GM18951 (cell line): ENCODE measurements at regions of chr9 and their contacts with region 1.

Region 1: DNA sequence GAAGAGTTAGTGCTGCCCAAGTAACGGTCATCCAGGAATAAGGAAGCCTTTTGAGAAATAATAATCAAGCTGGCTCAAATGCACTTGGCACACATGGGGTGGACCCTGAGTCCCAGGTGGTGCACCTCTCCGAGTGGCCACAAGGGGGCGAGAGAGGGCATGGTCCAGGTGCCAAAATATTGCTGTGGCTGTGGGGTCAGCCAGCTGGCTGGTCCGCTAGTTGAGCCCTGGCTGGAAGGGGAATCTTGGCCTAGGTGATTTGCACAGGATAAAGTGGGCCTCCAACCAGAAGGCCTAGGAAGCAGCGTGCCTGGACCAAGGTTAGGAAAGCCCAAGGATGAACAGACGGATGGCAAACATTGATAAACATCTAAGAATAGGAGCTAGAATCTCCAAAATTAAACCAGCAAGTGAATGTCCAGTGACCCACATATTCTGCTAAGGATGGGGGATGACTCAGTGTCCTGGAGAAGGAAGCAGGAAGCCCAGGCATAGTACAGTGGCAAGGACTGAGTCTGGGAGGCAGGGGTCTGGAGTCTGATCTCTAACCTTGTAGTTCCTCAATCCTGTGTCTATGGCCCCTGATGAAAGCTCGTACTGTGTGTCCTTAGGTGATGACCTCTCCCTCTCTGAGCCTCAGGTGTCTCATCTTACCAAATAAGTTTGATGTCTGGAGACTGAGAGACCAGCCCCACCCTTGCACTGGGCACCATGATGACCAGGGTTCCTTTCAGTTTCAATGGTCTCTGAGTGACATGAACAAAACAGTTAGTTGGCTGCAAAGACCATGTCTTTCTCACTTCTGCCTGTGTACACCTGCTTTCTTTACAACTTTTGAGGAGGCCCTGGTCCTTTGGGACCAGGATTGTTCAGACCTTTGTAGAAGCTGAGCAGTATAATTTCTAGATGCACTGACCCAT is 19.2 kb upstream of the SHB start:
- POLR2A ChIP-seq: no peak

Region 2: GRCh38 chr9:37913480-37914153 is 174.6 kb before region 1 on chr9:
- in situ Hi-C with region 1: loop called (anchors 10 kb)
- POLR2A ChIP-seq: no peak

Region 3: GRCh38 chr9:38008168-38009034 is 79.9 kb before region 1 on chr9:
- in situ Hi-C with region 1: no loop called
- POLR2A ChIP-seq: no peak

Region 4: DNA sequence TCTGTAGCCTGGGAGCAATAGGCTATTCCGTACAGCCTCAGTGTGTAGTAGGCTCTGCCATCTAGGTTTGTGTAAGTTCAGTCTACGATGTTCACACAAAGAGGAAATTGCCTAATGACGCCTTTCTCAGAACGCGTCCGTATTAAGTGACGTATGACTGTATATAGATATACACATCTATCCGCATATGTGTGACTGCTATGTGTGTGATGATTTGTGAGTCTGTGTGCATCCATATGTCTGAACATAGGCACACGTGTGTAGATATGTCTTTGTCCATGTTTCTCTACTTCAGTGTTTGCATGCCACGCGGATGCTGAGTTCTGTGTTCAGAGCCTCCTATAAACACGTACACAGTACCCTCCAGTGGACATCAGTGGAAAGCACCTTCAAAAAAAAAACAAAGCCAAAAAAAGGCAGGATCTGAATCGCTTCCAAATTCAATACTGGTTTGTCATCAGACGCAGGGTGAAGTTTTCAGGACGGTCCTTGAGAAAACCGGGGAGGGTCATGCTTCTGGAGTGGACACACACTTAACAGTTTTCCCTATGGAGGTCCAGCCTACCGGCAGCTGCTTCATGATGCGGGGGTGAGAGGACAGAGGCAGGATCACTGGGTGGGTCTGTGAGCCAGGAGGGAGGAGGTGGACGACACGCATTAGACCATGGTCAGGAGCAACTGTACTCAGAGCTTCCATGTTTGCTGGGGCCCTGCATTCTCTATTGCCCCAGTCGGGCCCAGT is 274.8 kb after region 1 on chr9:
- in situ Hi-C with region 1: loop called (anchors 25 kb)
- POLR2A ChIP-seq: no peak